Cardiac septum (tissue), 1 donor: ENCODE measurements at regions of chr16 and their contacts with region 1.

Region 1: DNA sequence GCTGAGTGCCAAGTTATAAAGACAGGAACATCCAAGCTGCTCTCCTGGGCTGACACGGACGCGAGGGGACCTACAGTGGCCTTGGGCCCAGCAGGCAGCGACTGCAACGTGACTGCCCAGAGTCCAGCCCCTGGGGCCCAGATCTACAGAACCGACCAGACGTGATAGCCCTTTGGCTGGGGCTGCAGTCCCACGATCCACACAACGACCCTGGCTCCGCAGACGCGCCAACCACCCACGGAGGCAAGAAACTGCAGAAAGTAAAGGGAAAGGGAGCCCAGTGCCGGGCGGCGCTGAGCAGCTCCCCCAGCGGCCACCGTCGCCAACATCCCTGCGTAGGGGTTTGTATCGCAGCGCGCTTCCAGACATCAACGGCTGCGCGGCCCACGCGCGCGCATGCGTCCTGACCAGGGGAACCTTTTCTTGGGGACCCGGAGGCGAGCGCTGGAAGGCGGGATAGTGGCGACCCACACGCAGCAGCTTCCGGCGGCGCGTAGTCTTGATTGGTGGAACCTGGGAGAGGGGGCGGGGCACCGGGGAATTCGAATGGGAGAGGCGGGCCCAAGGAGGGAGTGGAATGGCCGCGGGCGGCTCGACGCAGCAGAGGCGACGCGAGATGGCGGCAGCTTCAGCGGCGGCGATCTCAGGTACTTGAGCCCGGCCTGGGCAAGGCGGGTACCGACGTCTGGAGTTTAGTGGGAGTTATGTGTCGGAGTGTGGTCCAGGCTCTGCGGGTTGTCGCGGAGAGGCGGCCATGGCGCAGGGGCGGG is at the start of gene KIF22:
- DNase-seq: peak; percentile 100
- total RNA-seq, gene KIF22: 21.8 TPM

Region 2: GRCh38 chr16:29805378-29806098 is 15.2 kb after region 1 on chr16:
- intact Hi-C with region 1: loop called (anchors 1 kb)
- DNase-seq: peak; percentile 99

Region 3: GRCh38 chr16:29815793-29816693 is 25.7 kb after region 1 on chr16 and contains the start of gene PAGR1:
- intact Hi-C with region 1: loop called (anchors 1 kb)
- DNase-seq: peak; percentile 99
- total RNA-seq, gene PAGR1: 15.6 TPM